Naive thymus-derived CD4-positive, alpha-beta T cell (primary cell): ENCODE measurements at regions of chr16 and their contacts with region 1.

Region 1: GRCh38 chr16:88686439-88687253 is at the start of gene SNAI3:
- DNase-seq: peak; percentile 69 to 96 (median 80)
- ATAC-seq: peak; percentile 91
- H3K4me3 ChIP-seq: peak within 1 kb of the TSS; percentile 85
- H3K4me3 Mint-ChIP-seq: peak within 1 kb of the TSS; percentile 72 to 87 (median 81)
- H3K27ac ChIP-seq: peak within 1 kb of the TSS; percentile 77
- H3K27ac Mint-ChIP-seq: peak within 1 kb of the TSS in 8 of 9 donors; percentile 6 to 81 (median 63)
- H3K4me1 ChIP-seq: peaks cover 21 to 48% of the 10 kb centered on the region in 2 donors
- H3K4me1 Mint-ChIP-seq: peaks cover 23 to 76% (median 59%) of the 10 kb centered on the region in 7 donors
- H3K27me3 ChIP-seq: no peaks in the 10 kb centered on the region
- H3K27me3 Mint-ChIP-seq: no peaks in the 10 kb centered on the region
- total RNA-seq, gene SNAI3: 2.7 to 13.0 (median 6.1) TPM

Region 2: DNA sequence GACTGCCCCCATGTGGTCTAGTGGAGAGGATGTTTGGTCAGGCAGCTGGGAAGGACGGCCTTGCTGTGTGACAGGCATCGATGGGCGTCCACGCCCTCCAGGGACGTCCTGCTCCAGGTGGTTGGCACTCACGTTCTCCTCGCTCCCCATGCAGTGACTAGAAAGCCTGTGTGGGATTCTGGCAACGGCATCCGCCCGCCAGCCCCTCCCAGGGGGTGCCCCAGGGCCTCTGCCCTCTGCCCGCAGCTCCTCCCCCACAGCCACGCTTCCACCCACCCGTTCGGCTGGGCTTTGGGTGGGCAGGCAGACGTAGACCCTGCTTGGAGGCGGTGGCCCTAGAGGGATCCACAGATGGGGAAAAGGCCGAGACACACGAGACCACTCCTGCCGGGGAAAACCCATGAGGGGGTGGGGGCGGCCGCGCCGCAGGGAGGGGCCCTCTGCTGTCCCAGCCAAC is 52.9 kb before region 1 on chr16:
- CTCF ChIA-PET with region 1: no interaction called
- POLR2A ChIA-PET with region 1: interaction called, 3 read pairs
- intact Hi-C with region 1: loop called in 1 of 2 experiments (anchors 2 kb)
- DNase-seq: peak in 2 of 9 donors; percentile 26 to 61
- ATAC-seq: peak; percentile 46
- H3K4me3 ChIP-seq: peak overlapping the region; percentile 52
- H3K4me3 Mint-ChIP-seq: peak overlapping the region; percentile 36 to 80 (median 63)
- H3K27ac ChIP-seq: peak overlapping the region; percentile 58
- H3K27ac Mint-ChIP-seq: peak overlapping the region in 2 of 9 donors; percentile 5 to 19
- H3K4me1 ChIP-seq: peaks cover 12 to 24% of the 10 kb centered on the region in 2 donors
- H3K4me1 Mint-ChIP-seq: peaks cover 17 to 36% (median 24%) of the 10 kb centered on the region in 7 donors
- H3K27me3 ChIP-seq: peaks cover 0 to under 1% of the 10 kb centered on the region in 2 donors
- H3K27me3 Mint-ChIP-seq: peaks cover 0 to 24% (median 8%) of the 10 kb centered on the region in 5 donors

Region 3: DNA sequence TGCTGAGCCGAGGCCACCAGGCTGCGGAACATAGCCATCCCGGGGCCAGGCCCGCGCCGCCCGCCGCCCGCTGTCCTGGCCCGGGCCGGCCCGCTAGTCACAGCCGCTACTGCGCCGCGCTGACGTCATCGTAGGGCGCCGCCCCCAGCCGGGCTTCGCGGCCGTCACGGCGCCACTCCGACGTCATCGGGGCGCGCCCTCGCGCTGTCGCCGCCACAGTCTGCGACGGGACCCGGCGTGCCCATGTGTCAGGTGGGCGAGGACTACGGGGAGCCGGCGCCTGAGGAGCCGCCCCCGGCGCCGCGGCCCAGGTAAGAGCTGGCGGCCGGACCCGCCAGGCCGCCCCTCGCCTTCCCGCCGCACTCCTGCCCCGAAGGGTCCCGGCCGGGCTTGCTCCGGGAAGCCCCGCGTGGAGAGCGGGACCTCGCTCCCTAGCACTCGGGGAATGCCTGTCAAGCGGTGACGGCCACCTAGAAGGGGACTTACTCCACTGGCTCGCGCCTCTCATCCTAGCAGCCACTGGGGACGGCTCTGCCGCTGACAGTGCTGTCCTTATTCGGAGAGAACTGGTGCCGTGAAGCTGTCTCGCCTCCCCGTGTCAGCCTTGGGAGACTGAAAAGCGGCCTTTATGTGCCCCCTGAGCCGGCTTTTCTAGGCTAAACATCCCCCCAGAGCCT is 19.8 kb after region 1 on chr16 and contains the starts of genes CTU2 and RNF166:
- CTCF ChIA-PET with region 1: interaction called, 17 read pairs
- POLR2A ChIA-PET with region 1: interaction called, 134 read pairs
- intact Hi-C with region 1: loop called (anchors 1 kb)
- DNase-seq: peak; percentile 86 to 98 (median 92)
- ATAC-seq: peak; percentile 84
- H3K4me3 ChIP-seq: peak within 1 kb of the TSS; percentile 79
- H3K4me3 Mint-ChIP-seq: peak within 1 kb of the TSS; percentile 78 to 98 (median 94)
- H3K27ac ChIP-seq: peak within 1 kb of the TSS; percentile 88
- H3K27ac Mint-ChIP-seq: peak within 1 kb of the TSS; percentile 85 to 98 (median 97)
- H3K4me1 ChIP-seq: peaks cover 25 to 40% of the 10 kb centered on the region in 2 donors
- H3K4me1 Mint-ChIP-seq: peaks cover 31 to 45% (median 41%) of the 10 kb centered on the region in 7 donors
- H3K27me3 ChIP-seq: no peaks in the 10 kb centered on the region
- H3K27me3 Mint-ChIP-seq: no peaks in the 10 kb centered on the region
- total RNA-seq, gene CTU2: 26.0 to 43.3 (median 28.3) TPM
- total RNA-seq, gene RNF166: 99.8 to 324 (median 133) TPM

Region 4: DNA sequence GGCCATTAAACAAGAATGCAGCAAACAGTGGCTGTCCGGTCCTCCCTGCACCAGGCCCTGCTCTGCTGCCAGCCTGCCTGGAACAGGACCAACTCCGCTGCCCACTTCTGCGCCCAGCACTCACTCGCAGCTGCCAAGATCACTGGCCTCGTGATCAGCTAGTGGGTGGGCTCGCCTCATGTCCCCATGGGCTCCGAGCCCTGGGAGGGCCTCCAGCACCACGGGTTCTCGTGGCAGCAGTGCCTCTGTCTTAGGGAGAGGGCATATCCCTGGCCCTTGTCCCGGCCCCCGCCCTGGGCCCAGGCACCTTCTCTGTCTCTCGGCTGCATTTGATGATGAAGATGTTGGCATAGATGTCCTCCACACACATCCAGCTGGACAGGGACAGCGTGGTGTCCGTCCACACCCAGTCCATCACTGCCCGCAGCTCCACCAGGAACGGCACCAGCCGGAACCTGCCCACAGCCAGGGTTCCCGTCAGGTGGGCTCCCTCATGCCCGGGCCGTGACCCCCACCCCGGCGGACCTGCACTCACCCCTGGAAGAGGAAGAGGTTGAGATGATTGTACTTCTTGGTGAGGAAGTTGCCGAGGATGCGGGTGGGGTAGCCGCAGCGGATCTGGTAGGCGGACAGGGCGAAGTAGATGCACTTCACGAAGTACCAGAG is 32.8 kb after region 1 on chr16:
- CTCF ChIA-PET with region 1: no interaction called
- POLR2A ChIA-PET with region 1: no interaction called
- intact Hi-C with region 1: no loop called
- DNase-seq: no peak
- ATAC-seq: no peak
- H3K4me3 ChIP-seq: no peak overlapping the region
- H3K4me3 Mint-ChIP-seq: no peak overlapping the region
- H3K27ac ChIP-seq: no peak overlapping the region
- H3K27ac Mint-ChIP-seq: peak overlapping the region in 1 of 9 donors; percentile 9
- H3K4me1 ChIP-seq: no peaks in the 10 kb centered on the region
- H3K4me1 Mint-ChIP-seq: no peaks in the 10 kb centered on the region
- H3K27me3 ChIP-seq: no peaks in the 10 kb centered on the region
- H3K27me3 Mint-ChIP-seq: no peaks in the 10 kb centered on the region

Region 5: DNA sequence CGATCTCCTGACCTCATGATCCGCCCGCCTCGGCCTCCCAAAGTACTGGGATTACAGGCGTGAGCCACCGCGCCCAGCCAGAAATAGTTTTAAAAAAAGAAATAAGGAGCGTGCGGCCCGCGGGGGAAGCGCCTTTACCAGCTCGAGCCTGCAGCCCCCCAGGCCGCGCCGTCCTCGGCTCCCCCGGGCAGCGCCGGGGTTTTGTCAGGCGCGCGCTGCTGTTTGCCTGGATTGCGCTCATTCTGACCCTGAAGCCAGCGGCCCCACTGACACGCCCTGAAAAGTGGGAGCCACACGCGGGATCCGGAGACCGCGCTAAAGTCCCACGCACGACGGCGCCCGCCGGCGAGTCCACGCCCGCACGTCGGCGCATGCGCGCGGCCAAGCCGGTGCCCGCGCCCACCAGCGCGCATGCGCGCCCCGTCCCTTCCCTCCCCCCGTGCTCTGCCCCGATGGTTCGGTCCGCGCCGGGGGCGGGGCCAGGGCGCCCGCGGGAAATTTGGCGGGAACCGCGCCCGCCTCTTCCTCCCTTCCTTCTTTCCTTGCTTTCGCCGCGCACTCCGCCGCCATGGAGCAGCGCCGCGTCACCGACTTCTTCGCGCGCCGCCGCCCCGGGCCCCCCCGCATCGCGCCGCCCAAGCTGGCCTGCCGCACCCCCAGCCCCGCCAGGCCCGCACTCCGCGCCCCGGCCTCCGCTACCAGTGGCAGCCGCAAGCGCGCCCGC is 116.8 kb after region 1 on chr16 and contains the start of gene CDT1:
- CTCF ChIA-PET with region 1: no interaction called
- POLR2A ChIA-PET with region 1: no interaction called
- intact Hi-C with region 1: loop called in 1 of 2 experiments (anchors 5 kb)
- DNase-seq: peak; percentile 73 to 96 (median 85)
- ATAC-seq: peak; percentile 85
- H3K4me3 ChIP-seq: peak within 1 kb of the TSS; percentile 68
- H3K4me3 Mint-ChIP-seq: peak within 1 kb of the TSS; percentile 82 to 90 (median 87)
- H3K27ac ChIP-seq: peak within 1 kb of the TSS; percentile 76
- H3K27ac Mint-ChIP-seq: peak within 1 kb of the TSS; percentile 77 to 90 (median 85)
- H3K4me1 ChIP-seq: peaks cover 10 to 15% of the 10 kb centered on the region in 2 donors
- H3K4me1 Mint-ChIP-seq: peaks cover 9 to 36% (median 20%) of the 10 kb centered on the region in 7 donors
- H3K27me3 ChIP-seq: no peaks in the 10 kb centered on the region
- H3K27me3 Mint-ChIP-seq: no peaks in the 10 kb centered on the region
- total RNA-seq, gene CDT1: 0.35 to 79.2 (median 1.6) TPM in 4 of 5 experiments, not detected in the other

Region 6: GRCh38 chr16:89410794-89411309 is 724.2 kb after region 1 on chr16:
- CTCF ChIA-PET with region 1: no interaction called
- POLR2A ChIA-PET with region 1: no interaction called
- intact Hi-C with region 1: no loop called
- DNase-seq: peak in 3 of 9 donors; percentile 17 to 34 (median 26)
- ATAC-seq: peak; percentile 28
- H3K4me3 ChIP-seq: no peak overlapping the region
- H3K4me3 Mint-ChIP-seq: peak overlapping the region; percentile 6 to 86 (median 76)
- H3K27ac ChIP-seq: peak overlapping the region; percentile 72
- H3K27ac Mint-ChIP-seq: peak overlapping the region; percentile 89 to 96 (median 93)
- H3K4me1 ChIP-seq: peaks cover 70 to 84% of the 10 kb centered on the region in 2 donors
- H3K4me1 Mint-ChIP-seq: peaks cover 71 to 92% (median 78%) of the 10 kb centered on the region in 7 donors
- H3K27me3 ChIP-seq: no peaks in the 10 kb centered on the region
- H3K27me3 Mint-ChIP-seq: no peaks in the 10 kb centered on the region